ENCODE measurements at regions of chr1 and their contacts with region 1.

Region 1: DNA sequence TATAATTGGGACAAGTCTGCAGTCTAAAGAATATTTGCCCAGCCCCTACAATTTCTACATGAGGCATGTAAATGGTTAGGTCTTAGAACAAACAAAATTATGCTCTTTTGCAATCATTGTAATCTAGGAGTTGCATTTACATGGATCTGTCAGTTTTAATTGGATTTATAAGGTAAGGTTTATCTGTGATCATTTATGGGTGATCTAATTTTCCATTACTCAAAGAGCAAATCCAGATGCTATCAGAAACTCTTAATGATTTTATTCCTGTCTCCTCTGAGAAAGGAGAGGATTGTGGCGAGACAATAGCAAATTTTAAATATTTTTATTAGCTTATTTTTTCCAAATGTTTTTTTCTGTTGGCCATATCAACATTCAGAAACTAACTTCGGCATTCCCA is 14.1 kb upstream of the NEGR1 start:
- DNase-seq: no peak
- ATAC-seq: no peak
- H3K4me3 Mint-ChIP-seq: no peak overlapping the region
- H3K27ac Mint-ChIP-seq: no peak overlapping the region
- H3K4me1 Mint-ChIP-seq: no peaks in the 10 kb centered on the region
- H3K27me3 Mint-ChIP-seq: no peaks in the 10 kb centered on the region
- CTCF ChIP-seq: no peak

Region 2: DNA sequence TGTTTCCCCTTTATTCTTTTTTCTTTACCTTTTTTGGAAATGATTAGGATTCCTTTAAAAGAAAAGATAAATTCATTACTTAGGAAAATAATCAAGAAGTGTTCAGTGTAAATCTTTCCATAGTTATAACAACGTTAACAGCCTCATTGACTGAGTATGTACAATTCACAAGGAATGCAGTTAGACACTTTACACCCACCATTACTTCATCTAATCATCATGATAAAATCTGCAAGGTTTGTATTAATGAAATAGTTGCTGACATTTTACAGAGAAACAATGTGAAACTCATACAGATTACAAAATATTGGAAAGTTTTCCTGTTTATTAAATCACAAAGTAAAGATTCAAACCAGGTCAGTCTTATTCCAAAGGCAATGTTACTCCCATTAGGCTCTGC is 45.2 kb after region 1 on chr1:
- CTCF ChIA-PET with region 1: no interaction called
- POLR2A ChIA-PET with region 1: interaction called, 4 read pairs
- intact Hi-C with region 1: loop called (anchors 1 kb)
- DNase-seq: no peak
- ATAC-seq: no peak
- H3K4me3 Mint-ChIP-seq: no peak overlapping the region
- H3K27ac Mint-ChIP-seq: no peak overlapping the region
- H3K4me1 Mint-ChIP-seq: no peaks in the 10 kb centered on the region
- H3K27me3 Mint-ChIP-seq: no peaks in the 10 kb centered on the region
- CTCF ChIP-seq: no peak